Activated CD4-positive, alpha-beta memory T cell treated with anti-CD3 and anti-CD28 coated beads, Interleukin-2, amount 10 ng/mL, durations not matched to agents 7 days and 5 days (primary cell): ENCODE measurements at regions of chr11 and their contacts with region 1.

Region 1: GRCh38 chr11:124875943-124876817 is 10.9 kb downstream of the ROBO3 start:
- DNase-seq: peak; percentile 84
- H3K4me3 Mint-ChIP-seq: peak overlapping the region; percentile 79
- H3K27ac Mint-ChIP-seq: peak overlapping the region; percentile 59
- H3K4me1 Mint-ChIP-seq: peaks cover 20% of the 10 kb centered on the region
- H3K27me3 Mint-ChIP-seq: peaks cover 44% of the 10 kb centered on the region

Region 2: GRCh38 chr11:124865921-124866583 is 10.1 kb before region 1 on chr11:
- CTCF ChIA-PET with region 1: interaction called, 20 read pairs
- POLR2A ChIA-PET with region 1: interaction called, 7 read pairs
- DNase-seq: peak; percentile 54
- H3K4me3 Mint-ChIP-seq: no peak overlapping the region
- H3K27ac Mint-ChIP-seq: no peak overlapping the region
- H3K4me1 Mint-ChIP-seq: peaks cover 20% of the 10 kb centered on the region
- H3K27me3 Mint-ChIP-seq: peaks cover 93% of the 10 kb centered on the region

Region 3: DNA sequence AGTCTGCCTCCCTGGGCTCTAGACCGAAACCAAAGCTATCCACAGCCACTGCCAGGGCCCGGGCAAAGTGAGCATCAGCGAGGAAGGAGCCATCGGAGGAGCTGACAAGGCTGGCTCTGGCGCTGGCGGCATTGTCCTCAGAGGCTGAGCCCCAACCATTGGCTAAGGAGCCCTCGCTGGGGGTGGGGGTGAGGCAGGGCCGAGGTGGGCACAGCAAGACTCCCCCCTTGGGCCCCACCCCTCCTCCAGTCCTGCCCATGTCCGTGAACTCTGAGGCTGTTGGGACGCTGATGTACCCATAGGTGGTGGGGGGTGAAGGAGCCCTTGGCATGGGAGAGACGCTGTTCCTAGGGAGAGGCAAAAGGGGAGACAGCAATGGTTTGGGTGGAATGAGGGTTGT is 10.3 kb after region 1 on chr11:
- CTCF ChIA-PET with region 1: interaction called, 10 read pairs
- POLR2A ChIA-PET with region 1: no interaction called
- DNase-seq: no peak
- H3K4me3 Mint-ChIP-seq: no peak overlapping the region
- H3K27ac Mint-ChIP-seq: no peak overlapping the region
- H3K4me1 Mint-ChIP-seq: no peaks in the 10 kb centered on the region
- H3K27me3 Mint-ChIP-seq: peaks cover 9% of the 10 kb centered on the region

Region 4: DNA sequence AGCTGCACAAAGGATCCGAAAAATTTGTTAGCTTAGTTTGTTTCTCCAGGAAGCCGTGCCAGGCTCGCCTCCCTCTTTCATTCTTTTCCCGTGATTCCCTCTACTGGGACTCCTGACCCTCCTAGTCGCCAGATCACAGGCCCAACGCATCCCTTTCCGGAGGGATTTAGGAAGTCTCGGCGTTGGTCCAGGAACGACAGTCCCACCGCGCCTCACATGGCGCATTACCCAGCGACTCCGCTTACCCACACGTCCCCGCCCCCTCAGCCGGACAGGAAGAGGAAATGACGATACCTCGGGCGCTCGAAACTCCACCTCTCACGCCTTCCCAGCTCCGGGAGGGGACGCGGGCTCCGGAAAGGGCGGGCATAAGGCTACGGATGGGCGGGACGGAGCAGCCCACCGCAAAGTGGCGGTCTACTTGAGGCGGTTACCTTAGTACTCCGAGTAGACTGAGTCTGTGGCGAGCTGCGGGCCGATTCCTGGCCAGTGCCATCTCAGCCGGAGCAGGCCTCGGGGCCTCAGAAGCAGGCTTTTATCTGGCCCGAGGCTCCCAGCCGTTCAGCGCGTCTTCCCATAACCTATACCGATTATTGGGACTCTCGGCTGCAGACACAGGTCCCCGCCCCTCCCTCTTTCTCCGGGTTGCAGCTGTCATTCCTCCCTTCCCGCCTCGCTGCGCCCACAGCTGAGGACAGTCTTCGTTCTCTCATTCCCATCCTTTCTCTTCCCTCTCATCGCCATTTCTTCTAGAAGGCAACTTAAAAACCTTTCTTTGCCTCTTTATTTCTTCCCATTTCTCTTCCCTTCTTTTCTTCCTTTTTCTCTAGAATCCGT is 77.8 kb after region 1 on chr11 and contains the start of gene CCDC15:
- CTCF ChIA-PET with region 1: interaction called, 22 read pairs
- POLR2A ChIA-PET with region 1: interaction called, 10 read pairs
- DNase-seq: peak; percentile 97
- H3K4me3 Mint-ChIP-seq: no peak within 1 kb of the TSS
- H3K27ac Mint-ChIP-seq: no peak within 1 kb of the TSS
- H3K4me1 Mint-ChIP-seq: peaks cover 20% of the 10 kb centered on the region
- H3K27me3 Mint-ChIP-seq: no peaks in the 10 kb centered on the region
- total RNA-seq, gene CCDC15: 9.2 to 9.7 TPM

Region 5: GRCh38 chr11:125111343-125112207 is 235.4 kb after region 1 on chr11 and contains the start of gene TMEM218:
- CTCF ChIA-PET with region 1: interaction called, 12 read pairs
- POLR2A ChIA-PET with region 1: no interaction called
- DNase-seq: peak; percentile 98
- H3K4me3 Mint-ChIP-seq: peak within 1 kb of the TSS; percentile 94
- H3K27ac Mint-ChIP-seq: peak within 1 kb of the TSS; percentile 83
- H3K4me1 Mint-ChIP-seq: peaks cover 19% of the 10 kb centered on the region
- H3K27me3 Mint-ChIP-seq: peaks cover 2% of the 10 kb centered on the region
- total RNA-seq, gene TMEM218: 13.7 to 15.6 TPM